Naive thymus-derived CD4-positive, alpha-beta T cell (primary cell): ENCODE measurements at regions of chr2 and their contacts with region 1.

Region 1: DNA sequence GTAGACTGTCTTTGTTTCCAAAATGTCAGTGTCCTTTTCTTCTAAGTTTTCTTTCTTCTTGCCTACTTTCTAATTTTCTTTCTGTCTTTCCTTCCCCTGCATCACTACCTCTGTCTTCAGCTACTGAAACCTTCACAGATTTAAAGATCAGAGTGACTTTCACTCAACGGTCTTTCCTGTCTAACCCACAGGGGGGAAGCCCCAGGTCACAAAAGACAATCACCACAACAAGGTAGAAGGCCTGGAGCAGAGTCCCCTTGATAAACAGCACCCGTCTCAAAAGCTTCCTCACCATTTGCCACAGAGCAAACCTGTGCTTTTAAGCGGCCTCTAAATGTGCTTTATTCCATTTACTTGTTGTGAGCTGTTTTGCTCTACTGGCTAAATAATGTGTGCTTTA is 665.4 kb downstream of the BCL11A start:
- DNase-seq: peak in 8 of 9 donors; percentile 22 to 90 (median 86)
- ATAC-seq: peak; percentile 97
- H3K4me3 ChIP-seq: no peak overlapping the region
- H3K4me3 Mint-ChIP-seq: peak overlapping the region; percentile 3 to 85 (median 72)
- H3K27ac ChIP-seq: peak overlapping the region; percentile 54
- H3K27ac Mint-ChIP-seq: peak overlapping the region; percentile 29 to 92 (median 85)
- H3K4me1 ChIP-seq: peaks cover 0 to 38% of the 10 kb centered on the region in 2 donors
- H3K4me1 Mint-ChIP-seq: peaks cover 28 to 74% (median 57%) of the 10 kb centered on the region in 7 donors
- H3K27me3 ChIP-seq: no peaks in the 10 kb centered on the region
- H3K27me3 Mint-ChIP-seq: peaks cover 0 to 16% (median 0%) of the 10 kb centered on the region in 5 donors

Region 2: GRCh38 chr2:59301466-59302402 is 586.3 kb before region 1 on chr2:
- CTCF ChIA-PET with region 1: no interaction called
- POLR2A ChIA-PET with region 1: no interaction called
- intact Hi-C with region 1: loop called in 1 of 2 experiments (anchors 5 kb)
- DNase-seq: peak in 5 of 9 donors; percentile 23 to 54 (median 36)
- ATAC-seq: peak; percentile 74
- H3K4me3 ChIP-seq: no peak overlapping the region
- H3K4me3 Mint-ChIP-seq: no peak overlapping the region
- H3K27ac ChIP-seq: no peak overlapping the region
- H3K27ac Mint-ChIP-seq: no peak overlapping the region
- H3K4me1 ChIP-seq: no peaks in the 10 kb centered on the region
- H3K4me1 Mint-ChIP-seq: no peaks in the 10 kb centered on the region
- H3K27me3 ChIP-seq: no peaks in the 10 kb centered on the region
- H3K27me3 Mint-ChIP-seq: peaks cover 0 to 23% (median 5%) of the 10 kb centered on the region in 5 donors

Region 3: GRCh38 chr2:59919579-59919978 is 31.6 kb after region 1 on chr2:
- CTCF ChIA-PET with region 1: no interaction called
- POLR2A ChIA-PET with region 1: interaction called, 3 read pairs
- intact Hi-C with region 1: loop called in 1 of 2 experiments (anchors 1 kb)
- DNase-seq: no peak
- ATAC-seq: no peak
- H3K4me3 ChIP-seq: no peak overlapping the region
- H3K4me3 Mint-ChIP-seq: no peak overlapping the region
- H3K27ac ChIP-seq: no peak overlapping the region
- H3K27ac Mint-ChIP-seq: peak overlapping the region in 1 of 9 donors; percentile 3
- H3K4me1 ChIP-seq: no peaks in the 10 kb centered on the region
- H3K4me1 Mint-ChIP-seq: peaks cover 0 to 22% (median 14%) of the 10 kb centered on the region in 7 donors
- H3K27me3 ChIP-seq: no peaks in the 10 kb centered on the region
- H3K27me3 Mint-ChIP-seq: no peaks in the 10 kb centered on the region

Region 4: DNA sequence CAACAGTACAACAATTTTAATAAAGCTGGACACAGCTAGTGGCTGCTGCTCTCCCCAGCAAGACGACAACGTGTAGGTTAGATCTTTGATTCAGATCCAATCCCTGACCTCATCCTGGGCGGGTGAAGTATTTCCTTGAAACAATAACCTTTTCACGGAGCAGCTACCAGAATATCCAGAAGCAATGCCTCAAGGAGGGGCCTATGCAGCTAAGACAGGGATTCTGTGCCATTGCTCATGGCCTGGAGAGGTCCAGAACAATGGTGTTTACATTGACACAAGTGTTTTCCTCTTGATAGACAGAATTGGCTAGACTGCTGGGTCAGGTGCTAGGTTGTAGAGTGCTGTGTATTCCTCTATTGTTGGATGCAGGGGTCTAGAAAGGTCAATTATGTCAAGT is 145.3 kb after region 1 on chr2:
- CTCF ChIA-PET with region 1: no interaction called
- POLR2A ChIA-PET with region 1: no interaction called
- intact Hi-C with region 1: no loop called
- DNase-seq: no peak
- ATAC-seq: no peak
- H3K4me3 ChIP-seq: no peak overlapping the region
- H3K4me3 Mint-ChIP-seq: no peak overlapping the region
- H3K27ac ChIP-seq: no peak overlapping the region
- H3K27ac Mint-ChIP-seq: no peak overlapping the region
- H3K4me1 ChIP-seq: no peaks in the 10 kb centered on the region
- H3K4me1 Mint-ChIP-seq: peaks cover 0 to 10% (median 8%) of the 10 kb centered on the region in 7 donors
- H3K27me3 ChIP-seq: no peaks in the 10 kb centered on the region
- H3K27me3 Mint-ChIP-seq: peaks cover 0 to 5% (median 0%) of the 10 kb centered on the region in 5 donors

Region 5: DNA sequence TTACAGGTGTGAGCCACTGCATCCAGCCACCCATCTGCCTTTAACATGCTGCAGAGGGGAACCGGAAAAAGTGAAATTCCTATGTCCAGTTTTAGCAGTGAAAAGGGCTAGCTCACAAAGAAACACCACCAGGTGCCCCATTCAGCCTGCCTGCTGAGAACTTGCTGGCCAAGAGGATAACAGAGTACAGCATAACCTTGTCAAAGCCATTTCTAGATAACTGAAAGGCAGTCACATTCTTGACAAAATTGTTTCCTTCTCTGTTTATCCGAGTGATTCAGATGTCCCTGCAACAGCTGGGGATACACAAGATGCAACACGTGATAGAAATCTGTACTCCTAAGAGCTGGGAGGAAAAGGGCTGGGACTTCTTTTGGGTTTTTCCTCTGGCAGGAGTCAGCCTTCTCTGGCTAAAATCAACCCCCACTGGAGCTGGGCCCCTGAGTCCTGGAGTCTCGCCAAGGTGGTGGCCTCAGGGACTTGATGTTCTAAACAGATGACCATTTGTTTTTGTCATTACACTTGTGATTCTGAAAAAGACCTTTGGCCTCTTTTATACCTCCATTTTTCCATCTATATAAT is 160.0 kb after region 1 on chr2:
- CTCF ChIA-PET with region 1: no interaction called
- POLR2A ChIA-PET with region 1: no interaction called
- intact Hi-C with region 1: loop called in 1 of 2 experiments (anchors 10 kb)
- DNase-seq: no peak
- ATAC-seq: no peak
- H3K4me3 ChIP-seq: no peak overlapping the region
- H3K4me3 Mint-ChIP-seq: no peak overlapping the region
- H3K27ac ChIP-seq: no peak overlapping the region
- H3K27ac Mint-ChIP-seq: no peak overlapping the region
- H3K4me1 ChIP-seq: no peaks in the 10 kb centered on the region
- H3K4me1 Mint-ChIP-seq: peaks cover 0 to 4% (median 0%) of the 10 kb centered on the region in 7 donors
- H3K27me3 ChIP-seq: no peaks in the 10 kb centered on the region
- H3K27me3 Mint-ChIP-seq: no peaks in the 10 kb centered on the region

Region 6: DNA sequence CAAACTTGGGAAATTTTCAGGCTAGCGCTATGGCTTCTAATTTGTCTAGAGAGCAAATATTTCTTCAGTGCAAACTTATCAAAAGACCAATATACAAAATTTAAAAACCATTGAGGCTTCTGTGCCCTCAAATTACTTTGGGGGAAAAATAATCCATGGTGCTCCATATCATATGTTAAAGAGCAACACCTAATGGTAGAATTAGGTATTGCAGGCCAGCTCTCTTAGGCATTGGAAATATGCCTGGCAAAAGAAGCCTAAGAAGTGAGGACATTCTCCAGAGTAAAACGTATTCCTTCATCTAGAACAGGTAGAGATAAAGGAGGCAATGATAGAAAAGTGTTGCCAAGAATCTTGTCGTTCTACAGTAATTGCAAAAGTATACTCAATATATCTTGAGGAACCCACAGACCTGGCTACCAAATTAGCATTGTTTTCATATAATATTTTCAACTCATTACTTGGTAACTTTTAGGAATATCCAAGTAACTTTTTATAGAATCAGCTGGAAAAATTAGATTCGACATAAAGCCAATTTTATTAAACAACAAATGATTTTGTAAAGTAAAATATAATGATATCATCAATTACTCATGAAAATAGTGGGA is 264.3 kb after region 1 on chr2:
- CTCF ChIA-PET with region 1: interaction called, 3 read pairs
- POLR2A ChIA-PET with region 1: no interaction called
- intact Hi-C with region 1: loop called (anchors 2 to 10 kb)
- DNase-seq: peak in 5 of 9 donors; percentile 9 to 36 (median 20)
- ATAC-seq: peak; percentile 49
- H3K4me3 ChIP-seq: no peak overlapping the region
- H3K4me3 Mint-ChIP-seq: no peak overlapping the region
- H3K27ac ChIP-seq: no peak overlapping the region
- H3K27ac Mint-ChIP-seq: no peak overlapping the region
- H3K4me1 ChIP-seq: no peaks in the 10 kb centered on the region
- H3K4me1 Mint-ChIP-seq: peaks cover 0 to 9% (median 4%) of the 10 kb centered on the region in 7 donors
- H3K27me3 ChIP-seq: no peaks in the 10 kb centered on the region
- H3K27me3 Mint-ChIP-seq: peaks cover 0 to 14% (median 7%) of the 10 kb centered on the region in 5 donors

Region 7: DNA sequence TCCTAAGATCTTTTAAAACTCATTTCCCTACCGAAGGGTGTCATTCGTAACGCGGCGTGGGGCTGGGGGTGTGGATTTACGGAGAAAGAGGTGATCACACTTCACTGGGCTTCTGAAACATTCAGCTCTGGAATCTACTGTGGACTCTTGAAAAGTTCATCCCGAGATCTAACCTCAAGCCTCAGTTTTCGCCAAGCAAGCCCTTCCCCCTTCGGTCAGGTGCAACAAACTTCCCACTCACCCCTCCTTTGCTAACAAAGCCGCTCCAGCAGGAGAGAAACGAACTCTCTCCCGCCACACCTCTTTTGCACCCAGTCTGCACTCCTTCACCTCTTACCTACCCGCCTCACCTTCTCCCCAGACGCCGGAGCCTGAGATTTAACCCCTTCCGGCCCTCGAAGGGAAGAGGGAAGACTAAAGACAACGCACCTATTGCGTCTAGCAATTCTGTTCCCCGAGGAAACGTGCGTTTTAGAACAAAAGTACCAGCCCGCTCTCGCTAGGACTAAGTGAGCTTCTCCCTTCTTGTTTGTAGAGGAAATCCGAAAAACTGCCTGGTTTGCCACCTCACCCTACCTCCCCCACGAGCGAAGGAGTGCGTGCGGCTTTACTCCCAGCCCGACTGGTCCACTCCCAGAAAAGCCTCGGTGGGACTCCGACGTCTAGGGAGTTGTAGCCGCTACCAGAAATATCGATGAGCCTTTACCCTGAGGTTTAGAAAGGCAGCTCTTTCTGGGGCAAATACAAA is 1129.0 kb after region 1 on chr2:
- CTCF ChIA-PET with region 1: no interaction called
- POLR2A ChIA-PET with region 1: no interaction called
- intact Hi-C with region 1: loop called in 1 of 2 experiments (anchors 5 kb)
- DNase-seq: peak; percentile 41 to 75 (median 72)
- ATAC-seq: peak; percentile 79
- H3K4me3 ChIP-seq: peak overlapping the region; percentile 100
- H3K4me3 Mint-ChIP-seq: peak overlapping the region; percentile 93 to 100 (median 97)
- H3K27ac ChIP-seq: peak overlapping the region; percentile 75
- H3K27ac Mint-ChIP-seq: peak overlapping the region; percentile 90 to 99 (median 95)
- H3K4me1 ChIP-seq: peaks cover 14 to 20% of the 10 kb centered on the region in 2 donors
- H3K4me1 Mint-ChIP-seq: peaks cover 23 to 68% (median 48%) of the 10 kb centered on the region in 7 donors
- H3K27me3 ChIP-seq: no peaks in the 10 kb centered on the region
- H3K27me3 Mint-ChIP-seq: no peaks in the 10 kb centered on the region